ENCODE measurements at regions of chr3 and their contacts with region 1.

Region 1: DNA sequence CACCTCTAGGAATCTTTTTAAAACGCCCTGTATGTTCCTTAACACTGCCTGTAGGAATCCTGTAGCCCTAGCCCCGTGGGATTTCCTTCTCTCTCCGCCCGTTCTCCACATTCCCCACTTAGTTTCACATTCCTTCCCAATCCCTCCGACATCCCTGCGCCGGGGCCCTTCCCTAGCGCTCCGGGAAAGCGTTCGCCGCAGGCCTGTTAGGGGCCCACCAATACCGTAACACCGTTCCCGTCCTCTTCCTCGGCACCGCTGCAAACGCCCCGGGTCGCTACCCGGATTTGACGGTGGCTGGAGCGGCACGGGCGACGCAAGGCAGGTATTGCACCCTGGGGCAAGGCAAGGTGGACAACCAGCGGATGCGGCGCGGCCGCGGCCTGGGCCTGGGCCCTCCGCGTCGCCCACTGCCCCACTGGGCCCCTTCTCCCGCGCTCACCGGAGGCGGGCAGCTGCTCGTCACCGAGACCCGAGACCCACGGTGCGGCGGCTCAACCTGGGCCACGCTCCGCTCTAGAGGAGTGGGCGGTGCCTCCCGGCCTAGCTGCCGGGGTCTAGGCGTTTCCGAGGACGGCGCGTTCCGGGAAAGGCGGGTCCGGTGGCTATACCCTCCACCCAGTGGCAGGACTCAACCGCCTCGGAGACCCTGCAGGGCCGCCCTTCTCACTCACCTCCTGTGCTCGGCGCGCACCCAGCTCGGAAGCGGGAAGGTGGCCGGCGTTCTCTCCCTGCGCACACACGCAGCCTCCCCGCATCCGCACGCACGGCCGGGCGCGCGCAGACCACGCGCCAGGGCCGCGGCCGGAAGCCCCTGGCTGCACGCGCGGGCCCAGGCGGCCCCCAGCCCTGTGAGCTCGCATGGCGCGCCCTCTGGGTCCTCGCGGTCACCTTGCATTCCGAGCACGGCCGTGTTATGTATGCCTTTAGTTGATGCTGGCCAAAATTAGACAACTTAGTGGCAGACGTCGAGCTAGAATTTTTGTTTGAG is at the start of gene B3GALNT1:
- DNase-seq: peak; percentile 69
- H3K4me3 ChIP-seq: peak within 1 kb of the TSS; percentile 27 to 84 (median 52)
- H3K27ac ChIP-seq: peak within 1 kb of the TSS; percentile 26
- H3K4me1 ChIP-seq: peaks cover 3% of the 10 kb centered on the region
- H3K27me3 ChIP-seq: no peaks in the 10 kb centered on the region
- CTCF ChIP-seq: peak in 1 of 2 donors; percentile 0
- POLR2A ChIP-seq: no peak
- total RNA-seq, gene B3GALNT1: 13.7 and 29.4 TPM in 2 replicates

Region 2: GRCh38 chr3:160754855-160755747 is 349.8 kb before region 1 on chr3:
- CTCF ChIA-PET with region 1: no interaction called
- POLR2A ChIA-PET with region 1: no interaction called
- dilution Hi-C with region 1: no loop called
- intact Hi-C with region 1: no loop called
- DNase-seq: peak; percentile 95
- H3K4me3 ChIP-seq: peak overlapping the region; percentile 49 to 80 (median 71)
- H3K27ac ChIP-seq: peak overlapping the region; percentile 84
- H3K4me1 ChIP-seq: peaks cover 8% of the 10 kb centered on the region
- H3K27me3 ChIP-seq: peaks cover 5 to 13% of the 10 kb centered on the region in 2 experiments
- CTCF ChIP-seq: no peak
- POLR2A ChIP-seq: no peak

Region 3: GRCh38 chr3:160765211-160765610 is 339.6 kb before region 1 on chr3:
- CTCF ChIA-PET with region 1: no interaction called
- POLR2A ChIA-PET with region 1: no interaction called
- dilution Hi-C with region 1: no loop called
- intact Hi-C with region 1: no loop called
- DNase-seq: no peak
- H3K4me3 ChIP-seq: no peak overlapping the region
- H3K27ac ChIP-seq: no peak overlapping the region
- H3K4me1 ChIP-seq: peaks cover 4% of the 10 kb centered on the region
- H3K27me3 ChIP-seq: no peaks in the 10 kb centered on the region
- CTCF ChIP-seq: no peak
- POLR2A ChIP-seq: no peak

Region 4: DNA sequence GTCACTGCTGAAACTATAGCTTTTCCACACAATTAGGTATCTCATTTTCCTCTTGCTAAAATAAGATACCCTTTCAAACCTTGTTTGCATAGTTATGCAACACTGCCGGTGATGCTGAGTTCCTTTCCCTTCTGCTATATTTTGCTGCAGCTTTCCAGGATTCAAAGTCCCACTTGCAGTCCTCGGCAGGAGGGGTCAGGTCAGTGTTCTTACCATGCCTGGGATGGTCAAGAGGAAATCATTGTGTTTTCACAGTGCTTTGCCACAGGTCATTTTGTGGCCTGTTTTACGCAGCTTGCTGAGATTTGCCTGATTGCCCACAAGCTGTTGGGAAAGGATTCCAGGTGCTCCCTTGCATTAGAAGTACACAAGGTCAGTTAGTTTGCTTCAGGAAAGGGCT is 156.6 kb before region 1 on chr3:
- CTCF ChIA-PET with region 1: no interaction called
- POLR2A ChIA-PET with region 1: no interaction called
- dilution Hi-C with region 1: no loop called
- intact Hi-C with region 1: loop called (anchors 5 kb)
- DNase-seq: peak; percentile 13
- H3K4me3 ChIP-seq: no peak overlapping the region
- H3K27ac ChIP-seq: no peak overlapping the region
- H3K4me1 ChIP-seq: no peaks in the 10 kb centered on the region
- H3K27me3 ChIP-seq: no peaks in the 10 kb centered on the region
- CTCF ChIP-seq: no peak
- POLR2A ChIP-seq: no peak

Region 5: GRCh38 chr3:161069511-161070263 is 35.2 kb before region 1 on chr3:
- CTCF ChIA-PET with region 1: interaction called, 4 read pairs
- POLR2A ChIA-PET with region 1: no interaction called
- dilution Hi-C with region 1: no loop called
- intact Hi-C with region 1: loop called (anchors 2 kb)
- DNase-seq: peak; percentile 98
- H3K4me3 ChIP-seq: no peak overlapping the region
- H3K27ac ChIP-seq: peak overlapping the region; percentile 70
- H3K4me1 ChIP-seq: peaks cover 29% of the 10 kb centered on the region
- H3K27me3 ChIP-seq: no peaks in the 10 kb centered on the region
- CTCF ChIP-seq: no peak
- POLR2A ChIP-seq: peak; percentile 43

Region 6: DNA sequence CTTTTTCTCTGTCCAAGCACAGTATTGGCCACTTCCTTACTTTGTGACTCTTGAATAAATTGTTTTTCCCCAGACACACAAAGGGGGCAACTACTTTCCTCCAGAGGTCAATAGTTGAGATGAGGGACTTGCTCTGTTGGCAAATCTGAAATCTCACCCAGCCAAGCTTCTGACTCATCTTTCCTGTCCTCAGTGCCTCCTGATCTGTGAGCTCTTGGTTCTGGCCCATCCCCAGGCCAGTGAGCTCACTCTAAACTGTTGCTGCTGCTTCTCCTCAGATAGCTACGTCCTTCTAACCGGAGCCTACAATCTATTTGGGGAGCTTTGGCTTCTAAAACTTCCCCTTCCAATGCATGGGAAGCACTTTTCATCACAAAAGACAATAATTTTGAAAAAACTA is 66.3 kb after region 1 on chr3:
- CTCF ChIA-PET with region 1: no interaction called
- POLR2A ChIA-PET with region 1: no interaction called
- dilution Hi-C with region 1: no loop called
- intact Hi-C with region 1: loop called (anchors 2 kb)
- DNase-seq: peak; percentile 84
- H3K4me3 ChIP-seq: no peak overlapping the region
- H3K27ac ChIP-seq: no peak overlapping the region
- H3K4me1 ChIP-seq: peaks cover 25% of the 10 kb centered on the region
- H3K27me3 ChIP-seq: no peaks in the 10 kb centered on the region
- CTCF ChIP-seq: no peak
- POLR2A ChIP-seq: peak; percentile 21